Naive thymus-derived CD8-positive, alpha-beta T cell (primary cell): ENCODE measurements at regions of chr16 and their contacts with region 1.

Region 1: GRCh38 chr16:30571695-30572600 is at the start of gene ZNF688:
- DNase-seq: peak; percentile 84 to 99 (median 96)
- ATAC-seq: peak; percentile 83 to 86
- H3K4me3 Mint-ChIP-seq: peak within 1 kb of the TSS; percentile 82 to 95 (median 92)
- H3K27ac Mint-ChIP-seq: peak within 1 kb of the TSS; percentile 93 to 99 (median 98)
- H3K4me1 Mint-ChIP-seq: peaks cover 17 to 52% (median 33%) of the 10 kb centered on the region in 4 donors
- H3K27me3 Mint-ChIP-seq: no peaks in the 10 kb centered on the region
- polyA plus RNA-seq, gene ZNF688: 21.2 to 22.0 (median 21.7) TPM

Region 2: DNA sequence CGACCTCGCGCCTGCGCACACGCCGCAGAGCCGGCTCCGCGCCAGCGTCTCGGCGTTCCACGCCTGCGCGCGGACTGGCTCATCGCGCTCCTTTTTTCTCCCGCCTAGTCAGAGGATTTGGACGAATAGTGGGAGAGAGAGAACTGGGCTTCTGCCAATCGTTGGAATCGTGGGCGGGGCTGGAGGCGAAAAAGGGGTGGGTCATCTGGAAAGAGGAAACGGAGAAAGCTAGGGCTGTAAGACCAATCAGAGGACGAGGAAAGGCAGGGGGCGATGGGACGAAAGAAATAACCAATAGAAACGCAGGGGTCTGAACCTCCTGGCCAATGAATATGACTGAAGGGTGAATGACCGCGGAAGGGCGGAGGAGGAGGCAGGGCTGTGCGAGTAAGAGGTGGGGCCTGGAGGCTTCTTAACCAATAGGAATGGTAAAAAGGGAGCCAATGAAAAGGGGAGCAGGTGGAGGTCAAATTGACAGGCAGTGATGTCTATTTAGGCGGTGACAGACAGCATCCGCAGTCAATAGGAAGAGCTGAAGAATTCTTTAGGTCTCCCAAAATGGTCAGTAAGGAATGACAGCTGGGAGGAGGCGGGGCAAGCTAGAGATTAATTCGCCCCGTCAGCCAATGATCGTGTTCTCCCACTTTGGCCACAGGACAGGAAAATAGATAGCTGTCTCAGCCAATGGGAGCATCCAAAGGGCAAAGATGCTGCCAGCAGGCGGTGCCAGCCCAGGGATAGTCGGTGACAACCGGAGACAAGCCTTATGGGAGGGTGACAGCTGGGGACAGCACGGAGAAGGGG is 201.3 kb before region 1 on chr16 and contains the start of gene TBC1D10B:
- POLR2A ChIA-PET with region 1: interaction called, 10 read pairs
- DNase-seq: peak; percentile 90 to 100 (median 99)
- ATAC-seq: peak; percentile 81 to 87
- H3K4me3 Mint-ChIP-seq: peak within 1 kb of the TSS; percentile 79 to 92 (median 88)
- H3K27ac Mint-ChIP-seq: peak within 1 kb of the TSS; percentile 87 to 97 (median 93)
- H3K4me1 Mint-ChIP-seq: peaks cover 30 to 56% (median 49%) of the 10 kb centered on the region in 4 donors
- H3K27me3 Mint-ChIP-seq: no peaks in the 10 kb centered on the region
- polyA plus RNA-seq, gene TBC1D10B: 6.6 to 10.5 (median 7.3) TPM

Region 3: DNA sequence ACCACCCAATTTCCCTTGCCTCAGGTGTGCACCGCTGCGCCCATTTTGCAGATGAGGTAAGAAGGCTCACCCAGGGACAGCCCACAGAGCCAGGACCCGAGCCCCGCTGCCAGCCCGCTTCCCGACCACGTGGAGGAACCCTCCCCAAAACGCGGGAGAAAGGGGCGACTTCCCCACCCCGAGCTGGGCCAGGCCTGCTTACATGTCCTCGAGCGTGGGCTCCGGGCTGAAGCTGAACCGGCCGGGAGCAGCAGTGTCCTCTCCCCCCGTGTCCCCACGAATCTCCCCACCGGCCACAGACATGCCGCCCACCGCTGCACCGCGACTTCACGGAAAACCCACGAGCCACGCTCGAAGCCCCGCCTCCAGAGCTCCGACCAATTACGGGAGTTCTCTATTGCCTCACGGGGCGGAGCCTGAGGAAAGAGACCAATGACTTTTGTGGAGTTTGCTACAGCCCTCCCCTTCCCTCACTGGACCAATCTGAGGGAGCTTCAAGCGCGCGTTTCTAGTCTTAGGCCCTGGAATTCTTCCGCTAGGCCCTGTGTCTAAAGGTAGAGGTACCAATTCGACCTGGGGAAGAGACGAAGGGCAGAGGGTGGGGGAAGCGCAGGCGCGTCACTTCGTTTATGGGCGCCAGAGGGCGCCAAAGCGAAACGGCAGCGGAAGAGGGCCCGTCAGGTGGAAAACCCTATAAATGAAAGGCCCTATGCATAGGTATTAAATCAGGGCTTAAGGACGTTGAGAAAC is 142.1 kb before region 1 on chr16 and contains the start of gene DCTPP1:
- POLR2A ChIA-PET with region 1: interaction called, 23 read pairs
- DNase-seq: peak; percentile 84 to 99 (median 96)
- ATAC-seq: peak; percentile 97
- H3K4me3 Mint-ChIP-seq: no peak within 1 kb of the TSS
- H3K27ac Mint-ChIP-seq: peak within 1 kb of the TSS in 4 of 10 donors; percentile 52 to 80 (median 75)
- H3K4me1 Mint-ChIP-seq: peaks cover 5 to 35% (median 12%) of the 10 kb centered on the region in 4 donors
- H3K27me3 Mint-ChIP-seq: no peaks in the 10 kb centered on the region
- polyA plus RNA-seq, gene DCTPP1: 63.0 to 79.6 (median 64.0) TPM

Region 4: GRCh38 chr16:30515275-30515674 is 56.7 kb before region 1 on chr16:
- POLR2A ChIA-PET with region 1: no interaction called
- DNase-seq: peak in 1 of 10 donors; percentile 34
- ATAC-seq: no peak
- H3K4me3 Mint-ChIP-seq: no peak overlapping the region
- H3K27ac Mint-ChIP-seq: peak overlapping the region in 8 of 10 donors; percentile 19 to 93 (median 62)
- H3K4me1 Mint-ChIP-seq: peaks cover 16 to 37% (median 26%) of the 10 kb centered on the region in 4 donors
- H3K27me3 Mint-ChIP-seq: no peaks in the 10 kb centered on the region

Region 5: GRCh38 chr16:30534368-30535105 is 37.4 kb before region 1 on chr16 and contains the start of gene ZNF747:
- POLR2A ChIA-PET with region 1: interaction called, 58 read pairs
- DNase-seq: peak; percentile 87 to 95 (median 90)
- ATAC-seq: peak; percentile 82 to 83
- H3K4me3 Mint-ChIP-seq: peak within 1 kb of the TSS; percentile 90 to 99 (median 95)
- H3K27ac Mint-ChIP-seq: peak within 1 kb of the TSS; percentile 87 to 100 (median 98)
- H3K4me1 Mint-ChIP-seq: peaks cover 12 to 49% (median 36%) of the 10 kb centered on the region in 4 donors
- H3K27me3 Mint-ChIP-seq: no peaks in the 10 kb centered on the region
- polyA plus RNA-seq, gene ZNF747: 9.5 to 12.0 (median 11.4) TPM

Region 6: DNA sequence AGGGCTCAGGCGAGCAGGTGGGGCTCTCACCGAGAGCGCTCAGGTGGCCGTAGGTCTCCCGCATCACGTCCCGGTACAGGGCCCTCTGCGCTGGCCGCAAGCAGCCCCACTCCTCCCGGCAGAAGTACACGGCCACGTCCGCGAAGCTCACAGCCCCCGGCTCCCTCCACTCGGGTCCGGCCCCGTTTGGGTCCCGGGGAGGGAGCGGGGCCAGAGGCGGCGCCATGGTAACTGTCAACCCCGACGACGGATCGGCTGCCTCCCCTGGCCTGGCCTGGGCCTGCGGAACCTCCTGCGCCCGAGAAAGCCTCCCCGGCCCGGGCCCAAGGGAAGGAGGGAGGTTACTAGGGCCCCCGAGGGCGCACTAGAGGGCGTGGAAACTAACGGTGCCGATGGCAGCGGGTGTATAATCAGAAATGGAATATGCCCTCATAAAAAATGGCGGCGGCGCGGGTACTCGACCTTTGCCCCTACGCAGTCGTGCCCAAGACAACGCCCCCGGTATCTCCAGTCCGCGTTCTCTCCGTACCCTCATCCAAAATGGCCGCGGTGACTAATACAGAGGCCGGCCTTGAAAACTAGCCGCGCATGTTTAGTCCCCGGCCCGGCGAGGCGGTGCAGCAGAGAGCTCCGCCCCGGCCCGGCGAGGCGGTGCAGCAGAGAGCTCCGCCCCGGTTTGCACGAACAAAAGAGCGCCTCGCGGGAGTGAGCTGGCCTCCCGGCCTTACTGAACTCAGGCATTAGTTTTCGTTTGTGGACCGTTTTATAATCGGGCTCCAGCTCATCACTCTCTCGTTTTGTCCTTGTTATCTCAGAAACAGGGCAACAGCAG is 13.8 kb before region 1 on chr16 and contains the start of gene ZNF764:
- POLR2A ChIA-PET with region 1: interaction called, 131 read pairs
- DNase-seq: peak; percentile 81 to 98 (median 93)
- ATAC-seq: peak; percentile 90
- H3K4me3 Mint-ChIP-seq: peak within 1 kb of the TSS; percentile 82 to 93 (median 86)
- H3K27ac Mint-ChIP-seq: peak within 1 kb of the TSS; percentile 85 to 97 (median 94)
- H3K4me1 Mint-ChIP-seq: peaks cover 13 to 53% (median 48%) of the 10 kb centered on the region in 4 donors
- H3K27me3 Mint-ChIP-seq: no peaks in the 10 kb centered on the region
- polyA plus RNA-seq, gene ZNF764: 3.6 to 6.5 (median 4.0) TPM

Region 7: GRCh38 chr16:30609926-30610839 is 38.2 kb after region 1 on chr16 and contains the start of gene ZNF689:
- POLR2A ChIA-PET with region 1: interaction called, 21 read pairs
- DNase-seq: peak; percentile 77 to 99 (median 94)
- ATAC-seq: peak; percentile 92 to 93
- H3K4me3 Mint-ChIP-seq: peak within 1 kb of the TSS; percentile 87 to 97 (median 94)
- H3K27ac Mint-ChIP-seq: peak within 1 kb of the TSS; percentile 94 to 99 (median 97)
- H3K4me1 Mint-ChIP-seq: peaks cover 5 to 30% (median 27%) of the 10 kb centered on the region in 4 donors
- H3K27me3 Mint-ChIP-seq: peaks cover 0 to 1% (median 0%) of the 10 kb centered on the region in 5 donors
- polyA plus RNA-seq, gene ZNF689: 7.7 to 12.5 (median 11.0) TPM

Region 8: DNA sequence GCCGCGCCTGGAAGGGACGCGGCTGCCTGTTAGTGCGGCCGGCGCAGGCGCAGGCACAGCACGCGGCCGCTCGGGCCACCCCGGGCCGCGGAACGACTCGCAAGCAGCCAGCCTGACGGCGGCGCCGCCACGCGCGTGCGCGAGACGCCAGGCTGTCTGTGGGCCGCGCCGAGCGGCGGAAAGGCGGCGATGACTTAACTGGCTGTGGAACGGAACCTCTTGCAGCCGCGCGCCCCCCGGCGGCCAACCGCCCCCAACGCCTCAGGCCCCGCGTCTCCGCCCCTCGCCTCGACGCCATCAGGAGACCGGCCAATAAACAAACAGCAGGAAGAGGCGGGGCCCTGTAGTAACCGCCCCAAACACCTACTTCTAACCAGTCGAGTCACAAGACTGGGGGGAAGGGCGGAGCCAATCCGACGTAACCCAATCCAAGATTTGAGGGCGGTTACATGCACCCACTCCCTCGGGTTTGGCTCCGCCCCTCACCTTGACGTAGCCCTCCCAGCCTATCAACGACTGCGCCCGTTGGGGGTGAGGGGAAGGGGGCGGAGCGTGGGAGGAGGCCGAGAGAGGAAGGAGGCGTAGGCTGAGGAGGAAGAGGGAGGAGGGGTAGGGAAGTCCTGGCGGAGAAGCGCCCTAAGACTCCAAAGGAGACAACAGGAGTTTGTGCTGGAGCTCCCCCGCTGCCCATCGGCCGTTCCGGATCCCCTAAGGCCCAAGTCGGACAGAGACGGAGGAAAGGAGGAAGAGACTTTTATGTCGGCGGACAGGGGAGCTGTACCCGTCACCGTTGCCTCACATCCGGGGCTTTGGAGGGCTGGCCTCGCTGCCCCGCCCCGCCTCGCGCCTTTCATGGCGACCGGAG is 86.2 kb after region 1 on chr16 and contains the start of gene FBRS:
- POLR2A ChIA-PET with region 1: interaction called, 22 read pairs
- DNase-seq: peak in 9 of 10 donors; percentile 99 to 100 (median 100)
- ATAC-seq: peak; percentile 66 to 72
- H3K4me3 Mint-ChIP-seq: peak within 1 kb of the TSS; percentile 90 to 99 (median 94)
- H3K27ac Mint-ChIP-seq: peak within 1 kb of the TSS; percentile 99 to 100 (median 100)
- H3K4me1 Mint-ChIP-seq: peaks cover 20 to 46% (median 42%) of the 10 kb centered on the region in 4 donors
- H3K27me3 Mint-ChIP-seq: no peaks in the 10 kb centered on the region
- polyA plus RNA-seq, gene FBRS: 3.2 to 8.0 (median 4.4) TPM

Region 9: DNA sequence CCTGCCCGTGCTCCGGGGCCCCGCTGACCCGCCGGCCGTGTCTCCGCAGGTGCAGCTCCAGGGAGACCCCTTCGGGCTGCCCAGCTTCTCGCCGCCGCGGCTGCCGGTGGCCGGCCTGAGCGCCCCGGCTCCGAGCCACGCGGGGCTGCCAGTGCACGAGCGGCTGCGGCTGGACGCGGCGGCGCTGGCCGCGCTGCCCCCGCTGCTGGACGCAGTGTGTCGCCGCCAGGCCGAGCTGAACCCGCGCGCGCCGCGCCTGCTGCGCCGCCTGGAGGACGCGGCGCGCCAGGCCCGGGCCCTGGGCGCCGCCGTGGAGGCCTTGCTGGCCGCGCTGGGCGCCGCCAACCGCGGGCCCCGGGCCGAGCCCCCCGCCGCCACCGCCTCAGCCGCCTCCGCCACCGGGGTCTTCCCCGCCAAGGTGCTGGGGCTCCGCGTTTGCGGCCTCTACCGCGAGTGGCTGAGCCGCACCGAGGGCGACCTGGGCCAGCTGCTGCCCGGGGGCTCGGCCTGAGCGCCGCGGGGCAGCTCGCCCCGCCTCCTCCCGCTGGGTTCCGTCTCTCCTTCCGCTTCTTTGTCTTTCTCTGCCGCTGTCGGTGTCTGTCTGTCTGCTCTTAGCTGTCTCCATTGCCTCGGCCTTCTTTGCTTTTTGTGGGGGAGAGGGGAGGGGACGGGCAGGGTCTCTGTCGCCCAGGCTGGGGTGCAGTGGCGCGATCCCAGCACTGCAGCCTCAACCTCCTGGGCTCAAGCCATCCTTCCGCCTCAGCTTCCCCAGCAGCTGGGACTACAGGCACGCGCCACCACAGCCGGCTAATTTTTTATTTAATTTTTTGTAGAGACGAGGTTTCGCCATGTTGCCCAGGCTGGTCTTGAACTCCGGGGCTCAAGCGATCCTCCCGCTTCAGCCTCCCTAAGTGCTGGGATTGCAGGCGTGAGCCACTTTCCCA is 330.4 kb after region 1 on chr16:
- POLR2A ChIA-PET with region 1: no interaction called
- DNase-seq: peak; percentile 31 to 71 (median 56)
- ATAC-seq: peak; percentile 85 to 87
- H3K4me3 Mint-ChIP-seq: peak overlapping the region; percentile 86 to 99 (median 96)
- H3K27ac Mint-ChIP-seq: peak overlapping the region; percentile 95 to 100 (median 98)
- H3K4me1 Mint-ChIP-seq: peaks cover 15 to 39% (median 31%) of the 10 kb centered on the region in 4 donors
- H3K27me3 Mint-ChIP-seq: no peaks in the 10 kb centered on the region